ENCODE measurements at regions of chr1 and their contacts with region 1.

Region 1: DNA sequence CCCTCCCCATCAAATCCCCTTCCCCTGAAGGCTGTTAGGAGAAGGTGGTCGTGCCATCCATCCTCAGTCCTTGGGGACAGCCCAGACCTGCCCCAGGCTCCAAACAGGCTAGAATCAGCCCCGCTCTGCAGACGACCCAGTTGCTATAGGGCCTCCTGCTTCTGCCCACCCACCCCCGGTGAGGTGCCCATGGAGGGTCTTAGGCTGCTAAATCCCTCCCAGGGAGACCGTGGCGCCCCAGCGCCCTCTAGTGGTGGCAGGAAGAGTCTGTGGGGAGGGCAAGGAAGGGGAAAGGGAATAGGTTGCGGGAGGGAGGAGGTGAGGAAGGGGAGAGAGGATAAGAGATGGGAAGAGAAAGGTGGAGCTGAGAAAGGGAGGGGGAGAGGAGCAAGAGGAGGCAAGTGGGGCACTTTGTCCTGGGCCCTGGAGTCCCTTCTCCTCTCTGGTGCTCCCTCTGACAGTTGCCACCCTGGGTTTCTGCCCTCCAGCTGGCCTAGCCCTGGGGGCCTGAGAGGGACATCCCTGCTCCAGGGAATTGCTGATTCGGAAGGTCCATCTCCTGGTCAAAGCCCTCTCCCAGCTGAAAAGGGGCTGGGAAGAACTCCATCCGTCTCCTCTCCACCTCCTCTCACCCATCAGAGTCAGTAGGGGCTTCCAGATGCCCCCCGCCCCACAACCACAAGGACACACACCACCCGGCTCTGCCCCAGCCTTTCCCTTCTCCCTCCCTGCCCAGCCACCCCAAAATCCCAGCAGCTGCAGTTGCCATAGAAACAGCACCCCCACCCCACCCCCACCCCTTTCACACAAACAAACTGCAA is 55.4 kb downstream of the CAMK2N1 start:
- DNase-seq: no peak
- H3K4me3 ChIP-seq: no peak overlapping the region
- H3K27me3 ChIP-seq: peaks cover 13% of the 10 kb centered on the region
- CTCF ChIP-seq: peak; percentile 83

Region 2: GRCh38 chr1:20284046-20284445 is 146.5 kb before region 1 on chr1:
- CTCF ChIA-PET with region 1: no interaction called
- POLR2A ChIA-PET with region 1: no interaction called
- DNase-seq: no peak
- H3K4me3 ChIP-seq: no peak overlapping the region
- H3K27me3 ChIP-seq: peaks cover 4% of the 10 kb centered on the region
- CTCF ChIP-seq: no peak

Region 3: GRCh38 chr1:20361806-20362640 is 68.5 kb before region 1 on chr1:
- CTCF ChIA-PET with region 1: interaction called, 23 read pairs
- POLR2A ChIA-PET with region 1: no interaction called
- DNase-seq: no peak
- H3K4me3 ChIP-seq: no peak overlapping the region
- H3K27me3 ChIP-seq: peaks cover 34% of the 10 kb centered on the region
- CTCF ChIP-seq: peak; percentile 91

Region 4: DNA sequence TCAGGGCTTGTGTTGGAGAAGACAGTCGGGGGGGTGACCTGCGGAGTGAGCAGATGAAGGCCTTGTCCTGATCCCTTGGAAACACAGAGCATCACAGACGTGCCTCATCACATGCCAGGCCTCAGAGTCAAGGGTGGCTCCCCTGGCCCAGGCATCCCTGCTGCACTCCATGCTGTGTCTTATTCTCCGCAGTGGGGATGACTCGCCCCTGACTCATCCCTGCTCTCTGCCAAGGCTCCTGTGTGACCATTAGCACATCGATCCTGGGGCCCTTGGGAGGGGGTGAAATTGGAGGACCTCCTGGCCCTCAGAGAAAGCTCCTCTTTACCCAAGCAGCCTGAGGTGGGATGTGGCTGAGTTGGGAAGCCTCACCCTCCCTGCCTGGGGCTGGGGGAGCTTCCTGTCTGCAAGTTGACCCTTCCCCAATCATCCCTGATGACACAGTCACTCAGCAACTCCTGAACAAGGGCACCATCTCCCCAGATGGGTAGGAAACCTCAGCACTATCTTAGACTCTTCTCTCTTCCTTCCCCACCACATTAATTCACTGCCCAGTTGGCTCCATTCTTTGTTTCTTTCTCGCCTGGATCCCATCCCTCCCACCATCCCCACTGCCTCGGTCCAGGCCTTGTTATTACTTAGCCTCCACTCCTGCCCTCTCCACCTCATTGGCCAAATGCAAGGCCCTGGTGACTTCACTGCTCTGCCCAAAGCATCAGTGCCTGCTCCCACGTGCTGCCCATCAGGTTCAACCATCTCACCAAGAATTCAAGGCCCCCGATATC is 19.2 kb before region 1 on chr1:
- CTCF ChIA-PET with region 1: interaction called, 21 read pairs
- POLR2A ChIA-PET with region 1: interaction called, 3 read pairs
- DNase-seq: peak; percentile 57
- H3K4me3 ChIP-seq: no peak overlapping the region
- H3K27me3 ChIP-seq: no peaks in the 10 kb centered on the region
- CTCF ChIP-seq: no peak

Region 5: GRCh38 chr1:20446796-20447195 is 16.2 kb after region 1 on chr1:
- CTCF ChIA-PET with region 1: interaction called, 14 read pairs
- POLR2A ChIA-PET with region 1: no interaction called
- DNase-seq: no peak
- H3K4me3 ChIP-seq: no peak overlapping the region
- H3K27me3 ChIP-seq: peaks cover 3% of the 10 kb centered on the region; the same call in 1 of the 2 replicates
- CTCF ChIP-seq: no peak